MCF 10A (cell line): ENCODE measurements at regions of chr4 and their contacts with region 1.

Region 1: DNA sequence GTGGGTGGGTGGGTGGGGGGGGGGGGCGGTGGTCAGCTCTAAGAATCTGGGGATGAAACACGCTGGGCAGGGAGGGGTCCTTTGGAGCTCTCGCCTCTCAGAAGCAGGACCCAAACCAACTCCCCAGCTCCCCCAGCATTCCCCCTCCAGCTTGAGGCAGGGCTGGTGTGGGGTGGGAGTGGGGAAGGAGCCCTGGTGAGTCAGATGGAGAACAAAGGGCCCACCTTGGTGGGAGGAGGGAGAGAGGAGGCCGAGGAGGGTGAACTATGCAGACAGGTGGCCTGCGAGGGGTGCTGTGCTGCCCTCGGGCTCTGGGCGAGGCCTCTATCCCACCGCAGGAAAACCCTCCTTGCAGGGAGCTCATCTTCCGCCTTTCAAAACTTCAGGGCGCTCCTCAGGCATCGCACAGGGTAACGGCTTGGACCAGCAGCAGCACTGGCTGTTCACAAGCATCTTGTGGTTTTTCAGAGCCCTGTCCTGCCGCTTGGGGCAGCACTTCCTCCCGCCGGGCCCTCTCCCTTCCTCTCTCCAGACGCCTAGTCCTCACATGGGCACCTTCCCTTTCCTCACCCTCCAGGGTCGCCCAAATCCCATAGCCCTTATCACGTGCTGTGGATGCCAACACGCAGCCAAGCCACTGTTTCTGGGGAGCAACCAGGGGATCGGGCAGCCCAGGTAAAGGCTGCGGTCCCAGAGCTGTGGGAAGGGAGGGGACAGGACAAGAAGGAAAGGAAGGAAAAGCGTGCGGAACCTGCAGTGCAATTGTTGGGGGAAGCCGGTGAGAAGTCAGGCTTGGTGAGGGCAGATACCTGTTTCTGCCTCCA is 34.0 kb upstream of the GRPEL1 start:
- DNase-seq: peak; percentile 64
- H3K4me3 Mint-ChIP-seq: peak overlapping the region; percentile 72
- H3K27ac Mint-ChIP-seq: no peak overlapping the region
- H3K4me1 Mint-ChIP-seq: peaks cover 6% of the 10 kb centered on the region
- H3K27me3 Mint-ChIP-seq: peaks cover 19% of the 10 kb centered on the region
- CTCF ChIP-seq: peak; percentile 57

Region 2: GRCh38 chr4:7121174-7121573 is 19.3 kb after region 1 on chr4:
- CTCF ChIA-PET with region 1: interaction called, 15 read pairs
- POLR2A ChIA-PET with region 1: interaction called, 3 read pairs
- intact Hi-C with region 1: no loop called
- DNase-seq: no peak
- H3K4me3 Mint-ChIP-seq: no peak overlapping the region
- H3K27ac Mint-ChIP-seq: no peak overlapping the region
- H3K4me1 Mint-ChIP-seq: no peaks in the 10 kb centered on the region
- H3K27me3 Mint-ChIP-seq: peaks cover 25% of the 10 kb centered on the region
- CTCF ChIP-seq: no peak

Region 3: GRCh38 chr4:8029689-8030088 is 927.8 kb after region 1 on chr4:
- CTCF ChIA-PET with region 1: no interaction called
- POLR2A ChIA-PET with region 1: no interaction called
- intact Hi-C with region 1: no loop called
- DNase-seq: peak; percentile 95
- H3K4me3 Mint-ChIP-seq: no peak overlapping the region
- H3K27ac Mint-ChIP-seq: no peak overlapping the region
- H3K4me1 Mint-ChIP-seq: peaks cover 18% of the 10 kb centered on the region
- H3K27me3 Mint-ChIP-seq: peaks cover 21% of the 10 kb centered on the region
- CTCF ChIP-seq: no peak